GM23248 (cell line): ENCODE measurements at regions of chr7 and their contacts with region 1.

Region 1: DNA sequence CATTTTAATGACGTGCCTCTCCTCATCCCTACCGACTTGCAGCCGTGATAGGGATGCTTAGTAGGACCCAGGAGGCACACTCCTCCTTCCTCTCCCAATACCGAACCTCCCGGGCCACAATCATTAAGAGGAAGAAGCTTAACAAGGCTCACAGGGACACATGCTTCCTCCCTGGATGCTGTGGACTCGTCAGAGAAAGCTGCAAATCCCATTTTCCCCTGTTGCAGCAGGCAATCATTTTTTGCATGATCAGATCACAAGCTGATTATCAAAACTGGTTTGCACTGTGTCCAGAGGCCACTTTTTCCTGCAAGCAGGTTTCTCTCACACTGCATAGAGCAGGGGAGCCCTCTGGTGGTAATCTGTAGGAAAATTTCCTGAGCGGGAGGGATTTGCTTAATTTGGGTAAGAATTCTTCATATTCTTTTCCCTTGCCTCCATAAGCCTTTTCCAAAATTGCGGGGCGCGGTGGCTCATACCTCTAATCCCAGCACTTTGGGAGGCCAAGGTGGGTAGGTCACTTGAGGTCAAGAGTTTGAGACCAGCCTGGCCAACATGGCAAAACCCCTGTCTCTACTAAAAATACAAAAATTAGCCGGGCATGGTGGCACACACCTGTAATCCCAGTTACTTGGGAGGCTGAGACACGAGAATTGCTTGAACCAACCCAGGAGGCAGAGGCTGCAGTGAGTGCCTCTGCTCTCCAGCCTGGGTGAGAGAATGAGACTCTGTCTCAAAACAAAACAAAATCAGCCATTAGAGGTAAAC is 16.1 kb upstream of the LAMB4 start:
- DNase-seq: peak; percentile 86
- H3K4me3 ChIP-seq: peak overlapping the region; percentile 59
- H3K27ac ChIP-seq: no peak overlapping the region
- H3K4me1 ChIP-seq: no peaks in the 10 kb centered on the region
- H3K27me3 ChIP-seq: no peaks in the 10 kb centered on the region

Region 2: DNA sequence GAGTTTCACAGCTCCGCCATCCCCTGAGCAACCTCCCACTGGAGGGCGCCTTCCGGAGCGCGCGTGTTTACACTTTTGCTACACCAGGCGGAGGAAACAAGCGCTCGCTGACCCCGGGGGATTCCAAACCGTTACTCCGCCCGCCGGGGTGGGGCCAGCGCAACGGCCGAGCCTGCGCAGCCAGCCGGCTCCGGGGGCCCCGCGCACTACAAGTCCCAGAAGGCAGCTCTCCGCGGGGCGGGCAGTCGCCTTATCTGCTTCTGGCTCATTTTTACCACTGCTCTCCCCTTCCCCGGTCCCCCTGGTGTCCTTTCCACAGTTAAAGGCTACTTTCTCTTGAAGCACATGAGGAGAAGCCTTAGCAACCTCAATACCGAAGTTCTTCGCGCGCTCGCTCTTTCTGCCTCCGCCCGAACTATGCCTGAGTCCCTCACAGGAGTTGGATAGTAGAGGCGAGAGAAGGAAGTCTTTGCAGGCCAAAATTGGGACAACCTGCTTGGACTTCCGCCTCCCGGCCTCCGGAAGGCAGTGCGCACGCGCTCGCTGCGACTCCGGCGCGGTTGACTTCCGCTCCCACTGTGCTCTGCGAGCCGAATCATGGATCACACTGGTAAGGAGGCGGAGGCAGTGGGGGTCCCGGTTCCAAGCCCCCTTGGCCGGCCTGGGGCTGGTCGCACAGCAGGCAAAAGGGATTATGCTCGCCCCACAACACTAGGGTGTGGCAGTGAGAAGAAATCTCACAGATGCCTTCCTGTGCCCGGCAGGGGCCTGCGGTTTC is 402.5 kb before region 1 on chr7 and contains the start of gene CBLL1:
- in situ Hi-C with region 1: loop called (anchors 25 kb)
- DNase-seq: peak; percentile 99
- H3K4me3 ChIP-seq: peak within 1 kb of the TSS; percentile 92
- H3K27ac ChIP-seq: peak within 1 kb of the TSS; percentile 93
- H3K4me1 ChIP-seq: peaks cover 37% of the 10 kb centered on the region
- H3K27me3 ChIP-seq: no peaks in the 10 kb centered on the region
- total RNA-seq, gene CBLL1: 11.9 and 47.2 TPM in 2 replicates